Tibial artery (tissue), 4 donors: ENCODE measurements at regions of chr22 and their contacts with region 1.

Region 1: DNA sequence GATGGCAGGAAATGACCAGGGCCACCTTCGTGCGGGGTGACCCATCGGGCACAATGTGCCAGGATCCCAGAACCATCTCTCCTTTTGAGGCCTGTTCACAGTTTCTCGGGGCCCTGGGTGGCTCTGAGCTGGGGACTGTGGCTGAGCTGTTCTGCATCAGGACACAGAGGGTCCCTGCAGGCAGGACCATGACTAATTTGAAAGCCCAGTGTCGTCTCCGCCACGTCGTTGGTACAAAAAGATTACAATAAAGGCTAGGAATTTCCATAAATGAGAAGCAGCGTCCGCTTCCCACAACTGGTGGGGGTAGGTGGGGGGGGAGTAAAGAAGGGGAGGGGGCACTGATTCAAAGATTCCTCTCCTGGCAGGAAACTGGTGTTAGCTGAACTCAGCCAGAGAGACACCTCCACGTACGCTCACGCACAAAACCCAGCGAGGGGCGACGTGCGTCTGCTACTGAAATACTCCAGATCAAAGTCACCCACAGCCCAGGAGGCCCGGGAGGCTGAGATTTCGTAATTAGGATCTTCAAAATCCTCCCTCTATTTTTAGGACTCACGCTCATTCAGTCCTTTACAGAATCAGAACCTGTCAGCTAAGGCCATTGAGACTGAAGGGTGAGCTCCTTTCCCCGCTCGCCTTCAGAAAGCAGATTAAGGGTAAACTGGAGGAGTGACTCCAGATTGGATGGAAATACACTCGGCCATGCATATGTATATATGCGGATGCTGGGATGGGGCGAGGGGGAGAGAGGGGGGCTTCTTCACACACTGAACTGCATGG is 11.0 kb downstream of the MN1 start:
- DNase-seq: no peak
- H3K4me3 ChIP-seq: peak overlapping the region; percentile 36 to 37
- H3K27ac ChIP-seq: peak overlapping the region; percentile 92 to 94
- H3K4me1 ChIP-seq: peaks cover 0 to 99% (median 49%) of the 10 kb centered on the region in 4 donors
- H3K27me3 ChIP-seq: no peaks in the 10 kb centered on the region
- CTCF ChIP-seq: no peak

Region 2: GRCh38 chr22:27749597-27750225 is 40.9 kb before region 1 on chr22:
- intact Hi-C with region 1: loop called (anchors 5 kb)
- DNase-seq: peak; percentile 9 to 82
- H3K4me3 ChIP-seq: no peak overlapping the region
- H3K27ac ChIP-seq: peak overlapping the region; percentile 78 to 85
- H3K4me1 ChIP-seq: peaks cover 12 to 81% (median 58%) of the 10 kb centered on the region in 4 donors
- H3K27me3 ChIP-seq: no peaks in the 10 kb centered on the region
- CTCF ChIP-seq: no peak

Region 3: GRCh38 chr22:27775758-27776649 is 14.6 kb before region 1 on chr22:
- intact Hi-C with region 1: no loop called
- DNase-seq: no peak
- H3K4me3 ChIP-seq: peak overlapping the region; percentile 3 to 15
- H3K27ac ChIP-seq: peak overlapping the region; percentile 92 to 94
- H3K4me1 ChIP-seq: peaks cover 5 to 99% (median 53%) of the 10 kb centered on the region in 4 donors
- H3K27me3 ChIP-seq: no peaks in the 10 kb centered on the region
- CTCF ChIP-seq: no peak

Region 4: DNA sequence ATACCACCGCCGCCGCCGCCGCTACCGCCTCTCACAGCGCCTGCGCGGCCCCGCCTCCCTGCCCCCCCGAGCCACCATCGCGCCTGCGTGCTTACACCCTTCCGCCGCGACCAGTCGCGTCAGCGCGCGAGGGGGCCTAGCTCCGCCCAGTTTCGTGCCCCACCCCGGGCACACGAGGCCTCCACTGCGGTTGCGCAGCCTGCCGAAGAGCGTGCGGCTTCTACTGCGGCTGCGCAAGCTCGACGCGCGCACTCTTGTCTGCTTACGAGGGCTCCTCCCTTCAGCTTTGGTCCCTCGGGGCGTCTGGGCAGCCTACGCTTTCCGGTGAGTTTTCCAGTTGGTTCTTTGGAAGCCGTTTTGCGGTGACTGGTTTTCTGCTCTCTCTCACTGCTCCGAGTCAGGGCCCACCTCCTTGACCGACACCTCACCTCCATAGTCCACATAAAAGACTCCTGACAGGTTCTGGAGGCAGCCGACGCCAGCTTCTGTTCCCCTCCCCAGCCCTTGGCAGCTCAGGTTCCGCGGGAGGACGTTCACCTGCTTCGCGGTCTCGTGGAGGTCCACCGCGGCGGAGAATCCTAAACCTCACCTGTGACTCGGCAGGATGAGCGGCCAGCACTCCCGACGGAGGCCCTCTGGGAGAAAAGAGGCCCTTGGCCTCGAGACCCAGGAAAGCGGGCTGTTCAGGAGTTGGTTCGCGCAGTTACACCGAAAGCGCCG is 128.8 kb after region 1 on chr22 and contains the start of gene PITPNB:
- intact Hi-C with region 1: no loop called
- DNase-seq: peak; percentile 93 to 99
- H3K4me3 ChIP-seq: peak within 1 kb of the TSS; percentile 74 to 92
- H3K27ac ChIP-seq: peak within 1 kb of the TSS; percentile 94 to 97
- H3K4me1 ChIP-seq: peaks cover 0 to 55% (median 24%) of the 10 kb centered on the region in 4 donors
- H3K27me3 ChIP-seq: no peaks in the 10 kb centered on the region
- CTCF ChIP-seq: no peak